Activated CD4-positive, alpha-beta memory T cell treated with anti-CD3 and anti-CD28 coated beads for 36 hours (primary cell): ENCODE measurements at regions of chr6 and their contacts with region 1.

Region 1: DNA sequence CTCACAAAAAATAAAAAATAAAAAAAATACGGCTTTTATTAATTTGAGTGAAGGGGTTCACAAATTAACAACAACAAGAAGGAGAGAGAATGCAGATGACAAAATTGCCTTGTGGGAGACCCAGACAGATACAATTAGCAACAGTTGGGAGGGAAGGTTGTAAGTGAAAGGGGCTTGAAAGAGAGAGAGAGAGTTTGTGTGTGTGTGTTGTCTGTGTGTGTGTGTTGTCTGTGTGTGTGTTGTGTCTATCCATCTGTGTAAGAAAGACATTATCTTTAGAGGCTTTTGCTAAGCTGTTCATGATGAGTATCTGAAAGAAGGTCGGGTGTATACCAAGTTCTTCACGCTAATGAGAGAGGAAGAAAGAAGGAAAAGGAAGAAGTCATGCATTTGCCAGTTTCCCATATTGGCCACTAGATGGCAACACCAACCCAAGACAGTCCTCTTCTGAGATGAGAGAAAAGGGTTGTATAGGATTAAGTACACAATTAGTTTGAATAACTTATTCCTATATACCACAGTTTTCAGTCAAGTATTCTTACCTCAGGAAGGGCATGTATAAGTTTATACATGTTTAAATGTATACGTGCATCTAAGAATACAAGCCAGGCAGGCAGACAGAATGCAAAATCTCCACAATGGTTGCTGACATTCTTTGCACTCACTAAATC is 63.7 kb upstream of the CD2AP start:
- DNase-seq: peak; percentile 32
- H3K4me3 Mint-ChIP-seq: peak overlapping the region; percentile 54
- H3K27ac Mint-ChIP-seq: no peak overlapping the region
- H3K4me1 Mint-ChIP-seq: peaks cover 16% of the 10 kb centered on the region
- H3K27me3 Mint-ChIP-seq: no peaks in the 10 kb centered on the region

Region 2: GRCh38 chr6:47477497-47478232 is 63.8 kb after region 1 on chr6 and contains the start of gene CD2AP:
- CTCF ChIA-PET with region 1: interaction called, 5 read pairs
- POLR2A ChIA-PET with region 1: no interaction called
- intact Hi-C with region 1: loop called (anchors 1 kb)
- DNase-seq: peak; percentile 92
- H3K4me3 Mint-ChIP-seq: peak within 1 kb of the TSS; percentile 98
- H3K27ac Mint-ChIP-seq: peak within 1 kb of the TSS; percentile 95
- H3K4me1 Mint-ChIP-seq: peaks cover 27% of the 10 kb centered on the region
- H3K27me3 Mint-ChIP-seq: no peaks in the 10 kb centered on the region
- total RNA-seq, gene CD2AP: 22.6 to 23.6 TPM

Region 3: GRCh38 chr6:47502920-47503319 is 89.0 kb after region 1 on chr6:
- CTCF ChIA-PET with region 1: no interaction called
- POLR2A ChIA-PET with region 1: no interaction called
- intact Hi-C with region 1: no loop called
- DNase-seq: no peak
- H3K4me3 Mint-ChIP-seq: no peak overlapping the region
- H3K27ac Mint-ChIP-seq: no peak overlapping the region
- H3K4me1 Mint-ChIP-seq: peaks cover 36% of the 10 kb centered on the region
- H3K27me3 Mint-ChIP-seq: no peaks in the 10 kb centered on the region

Region 4: DNA sequence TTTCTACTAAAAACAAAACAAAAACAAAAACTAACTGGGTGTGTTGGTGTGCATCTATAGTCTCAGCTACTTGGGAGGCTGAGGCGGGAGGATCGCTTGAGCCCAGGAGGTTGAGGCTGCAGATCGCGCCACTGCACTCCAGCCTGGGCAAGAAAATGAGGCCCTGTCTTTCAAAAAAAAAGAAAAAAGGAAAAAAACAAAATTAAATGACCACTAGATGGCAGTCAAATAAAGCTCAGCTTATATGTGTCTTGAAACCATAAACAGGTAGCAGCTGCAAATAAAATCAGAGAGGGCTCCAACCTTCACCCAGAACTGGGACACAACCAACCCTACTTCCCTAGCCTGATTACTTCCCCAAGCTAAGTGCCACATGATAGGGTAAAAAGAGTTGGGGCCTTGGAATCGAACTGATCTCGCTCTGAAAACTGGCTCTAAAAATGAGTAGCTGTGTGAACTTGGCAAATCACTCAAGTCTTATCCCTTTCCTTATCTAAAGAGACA is 217.4 kb after region 1 on chr6:
- CTCF ChIA-PET with region 1: interaction called, 17 read pairs
- POLR2A ChIA-PET with region 1: interaction called, 3 read pairs
- intact Hi-C with region 1: loop called (anchors 1 kb)
- DNase-seq: no peak
- H3K4me3 Mint-ChIP-seq: no peak overlapping the region
- H3K27ac Mint-ChIP-seq: no peak overlapping the region
- H3K4me1 Mint-ChIP-seq: peaks cover 6% of the 10 kb centered on the region
- H3K27me3 Mint-ChIP-seq: no peaks in the 10 kb centered on the region

Region 5: GRCh38 chr6:47733879-47734558 is 320.1 kb after region 1 on chr6:
- CTCF ChIA-PET with region 1: interaction called, 4 read pairs
- POLR2A ChIA-PET with region 1: no interaction called
- intact Hi-C with region 1: loop called (anchors 1 kb)
- DNase-seq: no peak
- H3K4me3 Mint-ChIP-seq: no peak overlapping the region
- H3K27ac Mint-ChIP-seq: no peak overlapping the region
- H3K4me1 Mint-ChIP-seq: peaks cover 4% of the 10 kb centered on the region
- H3K27me3 Mint-ChIP-seq: peaks cover 2% of the 10 kb centered on the region

Region 6: GRCh38 chr6:47780510-47781356 is 366.8 kb after region 1 on chr6:
- CTCF ChIA-PET with region 1: interaction called, 14 read pairs
- POLR2A ChIA-PET with region 1: no interaction called
- intact Hi-C with region 1: loop called (anchors 1 kb)
- DNase-seq: peak; percentile 45
- H3K4me3 Mint-ChIP-seq: no peak overlapping the region
- H3K27ac Mint-ChIP-seq: no peak overlapping the region
- H3K4me1 Mint-ChIP-seq: peaks cover 8% of the 10 kb centered on the region
- H3K27me3 Mint-ChIP-seq: peaks cover 2% of the 10 kb centered on the region

Region 7: GRCh38 chr6:47787620-47788497 is 374.0 kb after region 1 on chr6:
- CTCF ChIA-PET with region 1: interaction called, 6 read pairs
- POLR2A ChIA-PET with region 1: no interaction called
- intact Hi-C with region 1: loop called (anchors 2 kb)
- DNase-seq: peak; percentile 65
- H3K4me3 Mint-ChIP-seq: no peak overlapping the region
- H3K27ac Mint-ChIP-seq: no peak overlapping the region
- H3K4me1 Mint-ChIP-seq: peaks cover 1% of the 10 kb centered on the region
- H3K27me3 Mint-ChIP-seq: peaks cover 13% of the 10 kb centered on the region